ENCODE measurements at regions of chr12 and their contacts with region 1.

Region 1: DNA sequence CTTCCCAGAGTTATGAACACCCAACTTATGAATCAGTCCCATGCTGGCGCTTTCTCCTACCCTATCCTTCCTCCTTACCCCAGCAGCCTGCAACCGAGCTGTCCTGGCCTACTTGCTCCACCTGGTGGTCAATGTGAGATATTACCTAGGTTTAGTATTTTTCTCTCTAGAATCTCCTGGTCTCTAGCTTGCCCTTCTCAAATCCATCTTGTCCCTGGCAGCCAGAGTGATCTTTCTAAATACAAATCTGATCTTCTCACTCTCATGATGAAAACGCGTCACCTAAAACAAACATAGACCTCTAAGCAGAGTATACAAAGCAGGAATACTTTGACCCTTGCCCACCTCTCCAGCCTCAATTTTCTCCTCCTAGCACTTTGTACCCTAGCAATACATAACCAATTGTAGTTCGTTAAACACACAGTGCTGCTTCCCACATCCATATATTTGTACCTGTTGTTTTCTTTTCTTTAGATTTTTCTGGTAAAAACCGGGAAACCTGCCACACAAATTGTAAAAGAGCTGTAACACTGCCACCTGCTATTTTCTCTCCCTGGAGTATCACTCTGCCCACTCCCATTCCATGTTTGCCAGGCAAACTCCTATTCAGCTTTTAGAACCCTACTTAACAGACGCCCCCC is 20.0 kb upstream of the TCP11L2 start:
- DNase-seq: no peak
- ATAC-seq: peak; percentile 57

Region 2: DNA sequence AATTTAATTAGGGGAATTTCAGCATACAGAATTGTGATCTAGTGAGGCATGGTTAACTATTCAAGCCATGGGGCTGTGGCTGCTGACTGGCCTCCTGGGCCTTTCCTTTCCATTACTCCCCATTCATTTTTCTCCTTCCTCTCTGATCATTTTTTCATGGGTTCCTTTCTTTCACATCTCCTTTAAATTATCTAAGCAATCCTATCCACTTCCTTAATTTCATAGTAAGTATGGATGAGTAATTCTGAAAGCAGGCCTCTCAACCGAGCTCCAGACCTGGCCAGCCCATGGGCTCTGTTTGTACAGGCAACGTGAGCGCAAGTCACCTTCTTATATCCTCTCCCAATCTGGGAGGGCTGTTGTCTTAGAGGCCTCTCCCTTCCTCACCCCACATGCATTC is 48.1 kb before region 1 on chr12:
- intact Hi-C with region 1: loop called (anchors 10 kb)
- DNase-seq: no peak
- ATAC-seq: no peak

Measured in sciatic nerve (tissue), 2 donors.